Gastrocnemius medialis (tissue), 4 donors: ENCODE measurements at regions of chr9 and their contacts with region 1.

Region 1: GRCh38 chr9:2158111-2158610 is 143.0 kb downstream of the SMARCA2 start:
- DNase-seq: peak; percentile 32 to 35
- ATAC-seq: peak; percentile 37 to 67
- H3K4me3 ChIP-seq: peak overlapping the region; percentile 54 to 70 (median 60)
- H3K27ac ChIP-seq: peak overlapping the region; percentile 78 to 90 (median 85)
- H3K4me1 ChIP-seq: peaks cover 18 to 23% of the 10 kb centered on the region in 2 donors
- H3K27me3 ChIP-seq: no peaks in the 10 kb centered on the region
- CTCF ChIP-seq: peak in 1 of 5 experiments; percentile 11
- POLR2A ChIP-seq: no peak

Region 2: GRCh38 chr9:1916655-1917054 is 241.5 kb before region 1 on chr9:
- in situ Hi-C with region 1: no loop called
- intact Hi-C with region 1: no loop called
- DNase-seq: no peak
- ATAC-seq: no peak
- H3K4me3 ChIP-seq: no peak overlapping the region
- H3K27ac ChIP-seq: no peak overlapping the region
- H3K4me1 ChIP-seq: no peaks in the 10 kb centered on the region
- H3K27me3 ChIP-seq: peaks cover 0 to 5% (median 0%) of the 10 kb centered on the region in 3 donors
- CTCF ChIP-seq: no peak
- POLR2A ChIP-seq: no peak

Region 3: GRCh38 chr9:2109069-2109650 is 49.0 kb before region 1 on chr9:
- in situ Hi-C with region 1: no loop called
- intact Hi-C with region 1: no loop called
- DNase-seq: no peak
- ATAC-seq: no peak
- H3K4me3 ChIP-seq: no peak overlapping the region
- H3K27ac ChIP-seq: no peak overlapping the region
- H3K4me1 ChIP-seq: no peaks in the 10 kb centered on the region
- H3K27me3 ChIP-seq: no peaks in the 10 kb centered on the region
- CTCF ChIP-seq: no peak
- POLR2A ChIP-seq: no peak

Region 4: GRCh38 chr9:2291980-2292665 is 134.0 kb after region 1 on chr9:
- in situ Hi-C with region 1: no loop called
- intact Hi-C with region 1: loop called (anchors 5 kb)
- DNase-seq: peak; percentile 81 to 91
- ATAC-seq: peak; percentile 92 to 96
- H3K4me3 ChIP-seq: no peak overlapping the region
- H3K27ac ChIP-seq: peak overlapping the region; percentile 62 to 83 (median 76)
- H3K4me1 ChIP-seq: peaks cover 12 to 20% of the 10 kb centered on the region in 2 donors
- H3K27me3 ChIP-seq: no peaks in the 10 kb centered on the region
- CTCF ChIP-seq: no peak
- POLR2A ChIP-seq: no peak

Region 5: DNA sequence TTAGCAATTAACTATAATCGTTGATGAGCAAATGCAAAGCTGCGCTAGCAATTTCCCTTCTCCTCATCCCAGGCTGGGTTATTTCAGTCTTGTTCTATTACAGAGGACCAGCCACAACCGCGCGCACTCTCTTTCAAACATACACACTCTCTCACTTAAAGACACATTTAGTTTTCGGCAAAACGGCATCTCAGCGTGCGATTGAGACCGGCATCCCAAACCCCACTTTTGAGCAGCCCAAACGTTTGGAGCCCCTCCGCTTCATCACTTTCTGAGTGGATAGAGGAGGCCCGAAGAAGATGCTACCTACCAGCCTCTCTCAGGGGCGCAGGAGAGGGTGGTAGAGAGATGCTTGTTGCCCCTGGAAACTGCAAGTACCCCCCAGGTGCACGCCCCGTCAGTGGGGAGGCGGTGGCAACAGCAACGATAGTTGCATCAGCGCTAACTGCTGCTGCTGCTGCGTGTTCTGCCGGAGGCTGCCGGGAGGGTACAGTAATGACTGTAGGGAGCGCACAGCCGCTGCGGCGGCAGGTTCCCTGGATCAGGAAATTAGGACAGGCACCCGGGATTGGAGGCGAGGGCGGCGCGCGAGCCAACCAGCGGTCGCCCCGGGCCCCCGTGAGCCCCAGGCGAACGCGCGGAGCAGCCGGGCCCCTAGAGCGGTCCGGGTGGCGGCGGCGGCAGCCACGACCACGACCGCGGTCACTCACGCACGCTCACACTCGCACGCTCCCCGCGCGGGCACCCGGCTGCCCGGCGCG is 462.9 kb after region 1 on chr9:
- in situ Hi-C with region 1: no loop called
- intact Hi-C with region 1: loop called (anchors 10 kb)
- DNase-seq: peak; percentile 71 to 85
- ATAC-seq: peak; percentile 56 to 59
- H3K4me3 ChIP-seq: peak overlapping the region; percentile 72 to 94 (median 90)
- H3K27ac ChIP-seq: peak overlapping the region; percentile 95 to 98 (median 97)
- H3K4me1 ChIP-seq: peaks cover 16 to 29% of the 10 kb centered on the region in 2 donors
- H3K27me3 ChIP-seq: no peaks in the 10 kb centered on the region
- CTCF ChIP-seq: peak in 4 of 5 experiments; percentile 21 to 40 (median 32)
- POLR2A ChIP-seq: peak; percentile 69 to 70

Region 6: DNA sequence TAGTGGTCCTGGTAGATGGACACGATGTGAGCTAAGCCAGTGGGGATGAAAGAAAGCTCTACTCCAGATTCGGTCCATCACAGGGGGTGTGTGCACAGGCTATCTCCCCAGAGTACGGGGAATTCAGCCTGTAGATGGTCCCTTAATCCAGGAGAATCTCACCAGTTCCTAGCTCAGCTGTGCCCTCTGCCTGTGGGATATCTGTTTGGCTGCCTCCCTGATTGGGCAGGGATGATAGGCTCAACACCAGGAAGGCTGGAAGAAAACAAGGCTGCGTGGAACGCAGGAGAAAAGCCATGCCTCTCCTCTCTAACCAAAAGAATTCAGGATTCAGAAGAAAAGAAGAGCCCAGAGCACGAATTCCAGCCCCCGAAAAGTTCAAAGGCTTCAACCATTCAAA is 504.3 kb after region 1 on chr9:
- in situ Hi-C with region 1: no loop called
- intact Hi-C with region 1: loop called (anchors 10 kb)
- DNase-seq: peak in 1 of 2 donors; percentile 40
- ATAC-seq: peak in 1 of 2 donors; percentile 45
- H3K4me3 ChIP-seq: no peak overlapping the region
- H3K27ac ChIP-seq: peak overlapping the region; percentile 76 to 92 (median 86)
- H3K4me1 ChIP-seq: peaks cover 29 to 43% of the 10 kb centered on the region in 2 donors
- H3K27me3 ChIP-seq: no peaks in the 10 kb centered on the region
- CTCF ChIP-seq: peak in 3 of 5 experiments; percentile 24 to 33 (median 26)
- POLR2A ChIP-seq: no peak